CD14-positive monocyte (primary cell): ENCODE measurements at regions of chr1 and their contacts with region 1.

Region 1: GRCh38 chr1:41728403-41729202 is 190.1 kb downstream of the HIVEP3 start:
- DNase-seq: peak; percentile 63 to 80 (median 65)
- H3K4me3 ChIP-seq: peak overlapping the region in 1 of 3 experiments; percentile 31
- H3K4me3 Mint-ChIP-seq: no peak overlapping the region
- H3K27ac ChIP-seq: peak overlapping the region; percentile 97
- H3K27ac Mint-ChIP-seq: peak overlapping the region; percentile 99 to 100 (median 99)
- H3K4me1 ChIP-seq: peaks cover 95 to 99% of the 10 kb centered on the region in 2 donors
- H3K4me1 Mint-ChIP-seq: peaks cover 89% of the 10 kb centered on the region
- H3K27me3 ChIP-seq: no peaks in the 10 kb centered on the region
- H3K27me3 Mint-ChIP-seq: peaks cover 0 to 4% (median 2%) of the 10 kb centered on the region in 3 donors
- CTCF ChIP-seq: no peak

Region 2: GRCh38 chr1:41573785-41574713 is 154.6 kb before region 1 on chr1:
- intact Hi-C with region 1: loop called in 1 of 2 experiments (anchors 10 kb)
- DNase-seq: peak; percentile 65 to 73 (median 73)
- H3K4me3 ChIP-seq: no peak overlapping the region
- H3K4me3 Mint-ChIP-seq: no peak overlapping the region
- H3K27ac ChIP-seq: no peak overlapping the region
- H3K27ac Mint-ChIP-seq: peak overlapping the region in 2 of 7 donors; percentile 18 to 29
- H3K4me1 ChIP-seq: peaks cover 4 to 10% of the 10 kb centered on the region in 2 donors
- H3K4me1 Mint-ChIP-seq: peaks cover 12% of the 10 kb centered on the region
- H3K27me3 ChIP-seq: no peaks in the 10 kb centered on the region
- H3K27me3 Mint-ChIP-seq: peaks cover 0 to 5% (median 3%) of the 10 kb centered on the region in 3 donors
- CTCF ChIP-seq: peak; percentile 87

Region 3: DNA sequence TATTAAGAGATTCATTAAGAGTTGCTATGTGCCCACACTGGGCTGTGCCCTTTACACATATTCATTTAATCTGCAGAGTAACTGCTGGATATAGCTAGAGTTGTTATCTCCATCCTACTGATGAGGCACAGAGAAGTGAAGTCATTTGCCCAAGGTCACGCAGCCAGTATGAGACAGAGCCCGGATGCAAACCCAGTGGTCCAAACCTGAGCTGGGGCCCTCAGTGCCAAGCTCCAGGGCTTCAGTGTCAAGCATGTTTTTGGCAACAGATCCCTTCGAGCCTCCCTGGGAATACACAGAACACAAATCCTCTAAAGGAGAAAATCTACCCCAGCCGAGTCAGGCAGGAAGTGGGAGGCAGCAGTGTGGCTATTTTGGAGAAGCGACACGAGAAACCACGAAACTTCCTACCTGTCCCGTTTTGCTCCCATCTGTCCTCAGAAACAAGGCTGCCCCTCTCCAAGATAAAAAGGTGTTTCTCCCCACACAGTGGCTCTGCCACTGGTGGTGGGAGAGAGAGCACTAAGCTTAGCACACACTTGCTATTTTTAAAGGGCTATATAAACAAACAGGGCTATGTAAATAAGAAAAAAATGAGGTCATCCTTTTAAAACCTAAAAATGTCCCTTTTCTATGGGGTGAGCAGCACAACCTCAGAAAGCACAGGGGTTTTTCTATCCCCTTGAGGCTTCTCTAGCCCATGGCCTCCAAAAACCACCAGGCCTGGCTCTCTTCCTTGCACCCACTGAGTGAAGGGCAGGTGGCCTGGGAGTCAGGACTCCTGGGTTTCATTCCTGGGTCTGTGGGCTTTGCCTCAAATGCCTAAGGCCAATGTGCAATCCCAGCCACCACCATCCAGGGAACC is 105.5 kb before region 1 on chr1:
- intact Hi-C with region 1: no loop called
- DNase-seq: no peak
- H3K4me3 ChIP-seq: no peak overlapping the region
- H3K4me3 Mint-ChIP-seq: peak overlapping the region in 1 of 2 donors; percentile 64
- H3K27ac ChIP-seq: no peak overlapping the region
- H3K27ac Mint-ChIP-seq: no peak overlapping the region
- H3K4me1 ChIP-seq: peaks cover 14 to 16% of the 10 kb centered on the region in 2 donors
- H3K4me1 Mint-ChIP-seq: peaks cover 34% of the 10 kb centered on the region
- H3K27me3 ChIP-seq: no peaks in the 10 kb centered on the region
- H3K27me3 Mint-ChIP-seq: peaks cover 0 to 2% (median 0%) of the 10 kb centered on the region in 3 donors
- CTCF ChIP-seq: no peak

Region 4: GRCh38 chr1:41683681-41684500 is 44.7 kb before region 1 on chr1:
- intact Hi-C with region 1: loop called (anchors 5 kb)
- DNase-seq: peak; percentile 65 to 94 (median 88)
- H3K4me3 ChIP-seq: peak overlapping the region in 1 of 3 experiments; percentile 54
- H3K4me3 Mint-ChIP-seq: peak overlapping the region; percentile 16 to 77
- H3K27ac ChIP-seq: peak overlapping the region; percentile 18 to 79
- H3K27ac Mint-ChIP-seq: peak overlapping the region; percentile 79 to 92 (median 88)
- H3K4me1 ChIP-seq: peaks cover 48 to 75% of the 10 kb centered on the region in 2 donors
- H3K4me1 Mint-ChIP-seq: peaks cover 77% of the 10 kb centered on the region
- H3K27me3 ChIP-seq: no peaks in the 10 kb centered on the region
- H3K27me3 Mint-ChIP-seq: no peaks in the 10 kb centered on the region
- CTCF ChIP-seq: no peak

Region 5: GRCh38 chr1:41751804-41752513 is 23.4 kb after region 1 on chr1:
- intact Hi-C with region 1: loop called in 1 of 2 experiments (anchors 1 kb)
- DNase-seq: peak; percentile 94 to 97 (median 95)
- H3K4me3 ChIP-seq: peak overlapping the region in 1 of 3 experiments; percentile 21
- H3K4me3 Mint-ChIP-seq: peak overlapping the region; percentile 40 to 76
- H3K27ac ChIP-seq: peak overlapping the region; percentile 91 to 96
- H3K27ac Mint-ChIP-seq: peak overlapping the region; percentile 96 to 99 (median 98)
- H3K4me1 ChIP-seq: peaks cover 51 to 68% of the 10 kb centered on the region in 2 donors
- H3K4me1 Mint-ChIP-seq: peaks cover 60% of the 10 kb centered on the region
- H3K27me3 ChIP-seq: no peaks in the 10 kb centered on the region
- H3K27me3 Mint-ChIP-seq: peaks cover 0 to 7% (median under 1%) of the 10 kb centered on the region in 3 donors
- CTCF ChIP-seq: no peak

Region 6: DNA sequence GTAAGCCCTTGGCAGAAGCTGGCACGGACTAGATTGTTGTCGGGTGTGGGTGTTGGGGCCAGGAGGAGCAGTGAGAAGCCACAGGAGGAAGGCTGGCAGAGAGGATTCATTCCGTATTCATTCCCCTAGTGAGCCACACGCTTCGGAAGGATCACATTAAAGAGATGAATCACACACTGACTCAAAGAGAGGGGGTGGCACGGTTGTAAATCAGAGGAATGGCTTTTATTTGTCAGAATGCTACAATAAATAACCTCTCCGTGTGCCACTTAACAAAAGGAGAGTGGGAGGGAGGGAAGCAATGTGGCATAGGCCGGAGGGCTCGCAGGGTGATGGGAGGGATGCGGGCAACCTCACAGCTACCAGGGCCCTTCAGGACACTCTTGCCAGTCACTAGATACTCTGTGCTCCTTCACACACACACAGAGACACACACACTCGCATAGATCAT is 54.6 kb after region 1 on chr1:
- intact Hi-C with region 1: loop called in 1 of 2 experiments (anchors 10 kb)
- DNase-seq: peak; percentile 59 to 80 (median 61)
- H3K4me3 ChIP-seq: no peak overlapping the region
- H3K4me3 Mint-ChIP-seq: no peak overlapping the region
- H3K27ac ChIP-seq: no peak overlapping the region
- H3K27ac Mint-ChIP-seq: peak overlapping the region in 4 of 7 donors; percentile 37 to 78 (median 70)
- H3K4me1 ChIP-seq: peaks cover 26 to 27% of the 10 kb centered on the region in 2 donors
- H3K4me1 Mint-ChIP-seq: peaks cover 29% of the 10 kb centered on the region
- H3K27me3 ChIP-seq: no peaks in the 10 kb centered on the region
- H3K27me3 Mint-ChIP-seq: peaks cover 1 to 5% (median 4%) of the 10 kb centered on the region in 3 donors
- CTCF ChIP-seq: no peak

Region 7: GRCh38 chr1:42035830-42036604 is 307.4 kb after region 1 on chr1:
- intact Hi-C with region 1: no loop called
- DNase-seq: peak; percentile 90 to 93 (median 92)
- H3K4me3 ChIP-seq: peak overlapping the region; percentile 52 to 88 (median 52)
- H3K4me3 Mint-ChIP-seq: peak overlapping the region; percentile 75 to 89
- H3K27ac ChIP-seq: no peak overlapping the region
- H3K27ac Mint-ChIP-seq: no peak overlapping the region
- H3K4me1 ChIP-seq: peaks cover 15 to 20% of the 10 kb centered on the region in 2 donors
- H3K4me1 Mint-ChIP-seq: peaks cover 16% of the 10 kb centered on the region
- H3K27me3 ChIP-seq: peaks cover 0 to 8% of the 10 kb centered on the region in 2 donors
- H3K27me3 Mint-ChIP-seq: peaks cover 7 to 12% (median 9%) of the 10 kb centered on the region in 3 donors
- CTCF ChIP-seq: no peak